ENCODE measurements at regions of chr2 and their contacts with region 1.

Region 1: DNA sequence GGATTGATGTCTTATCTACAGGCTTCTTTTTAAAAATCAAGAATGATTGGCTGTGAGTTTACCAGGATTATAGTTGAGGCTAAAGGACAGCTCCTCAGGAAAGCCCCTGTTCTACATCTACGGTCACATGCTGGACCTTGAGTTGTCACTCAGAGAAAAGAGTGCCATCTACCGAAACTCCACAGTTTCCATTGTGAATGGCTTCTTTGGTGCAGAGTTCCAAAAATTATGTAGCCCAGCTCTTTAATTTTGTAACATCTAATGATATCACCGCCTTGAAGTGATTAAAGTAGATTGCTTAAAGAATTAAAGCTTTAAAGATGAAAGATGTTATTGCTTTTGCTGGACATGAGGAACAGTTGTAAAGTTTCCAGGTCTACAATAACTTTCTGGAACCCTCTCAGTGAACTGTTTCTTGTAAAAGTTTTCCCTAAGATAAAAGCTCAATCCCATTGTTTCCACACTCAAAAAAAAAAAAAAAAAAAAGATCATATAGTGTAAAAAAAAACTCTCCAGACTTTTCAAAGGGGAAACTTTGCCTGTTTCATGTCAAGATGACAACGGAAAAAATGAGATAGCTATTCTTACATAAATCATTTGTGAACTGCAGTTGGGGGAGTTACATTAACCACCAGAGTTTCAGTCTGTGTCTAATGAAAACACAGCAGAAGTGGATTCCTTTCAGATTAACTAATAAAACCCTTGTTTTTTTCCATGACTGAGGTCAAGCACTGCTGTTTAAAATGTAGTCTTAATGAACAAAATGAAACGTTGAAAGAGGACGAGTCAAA is 4.3 kb downstream of the COL3A1 start:
- DNase-seq: no peak
- ATAC-seq: peak; percentile 66
- H3K4me3 ChIP-seq: peak overlapping the region; percentile 51 to 76
- H3K27ac ChIP-seq: peak overlapping the region; percentile 78 to 87
- H3K4me1 ChIP-seq: peaks cover 0 to 2% of the 10 kb centered on the region in 2 donors
- H3K27me3 ChIP-seq: no peaks in the 10 kb centered on the region

Region 2: GRCh38 chr2:188598551-188598950 is 379.9 kb before region 1 on chr2:
- intact Hi-C with region 1: loop called in 1 of 2 experiments (anchors 10 kb)
- DNase-seq: no peak
- ATAC-seq: no peak
- H3K4me3 ChIP-seq: no peak overlapping the region
- H3K27ac ChIP-seq: peak overlapping the region in 1 of 2 donors; percentile 67
- H3K4me1 ChIP-seq: peaks cover 0 to 4% of the 10 kb centered on the region in 2 donors
- H3K27me3 ChIP-seq: no peaks in the 10 kb centered on the region

Region 3: DNA sequence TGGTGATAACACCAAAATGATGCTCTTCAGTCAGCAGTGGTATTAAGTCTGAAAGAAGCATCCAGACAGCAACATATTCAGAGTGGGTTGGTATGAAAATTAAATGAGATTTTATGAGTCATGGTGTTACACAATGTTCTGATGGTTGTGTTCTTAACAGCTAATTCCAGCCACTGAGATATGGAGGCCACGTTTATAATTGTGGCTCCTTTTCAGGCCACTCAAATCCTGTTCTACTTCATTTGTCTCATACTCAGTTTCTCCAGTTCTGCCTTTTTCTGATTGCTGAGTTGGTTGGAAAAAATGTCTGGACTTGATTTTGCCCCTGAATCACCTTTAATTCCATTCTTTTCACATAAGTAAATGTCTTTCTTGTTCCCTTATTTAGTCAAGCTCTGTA is 167.0 kb before region 1 on chr2:
- intact Hi-C with region 1: loop called (anchors 10 kb)
- DNase-seq: no peak
- ATAC-seq: peak; percentile 80
- H3K4me3 ChIP-seq: no peak overlapping the region
- H3K27ac ChIP-seq: peak overlapping the region; percentile 43 to 51
- H3K4me1 ChIP-seq: peaks cover 0 to 8% of the 10 kb centered on the region in 2 donors
- H3K27me3 ChIP-seq: no peaks in the 10 kb centered on the region

Region 4: GRCh38 chr2:188897096-188897495 is 81.4 kb before region 1 on chr2:
- intact Hi-C with region 1: loop called in 1 of 2 experiments (anchors 10 kb)
- DNase-seq: no peak
- ATAC-seq: peak; percentile 77
- H3K4me3 ChIP-seq: peak overlapping the region in 1 of 2 donors; percentile 11
- H3K27ac ChIP-seq: peak overlapping the region in 1 of 2 donors; percentile 36
- H3K4me1 ChIP-seq: peaks cover 0 to 6% of the 10 kb centered on the region in 2 donors
- H3K27me3 ChIP-seq: no peaks in the 10 kb centered on the region

Measured in aorta (tissue), 5 donors.